ENCODE measurements at regions of chr7 and their contacts with region 1.

Region 1: GRCh38 chr7:2403014-2403717 is at the start of gene CHST12:
- H3K4me3 ChIP-seq: peak within 1 kb of the TSS; percentile 74
- H3K27ac ChIP-seq: peak within 1 kb of the TSS; percentile 68; the same call in 1 of the 2 replicates
- H3K4me1 ChIP-seq: peaks cover 6% of the 10 kb centered on the region
- CTCF ChIP-seq: no peak

Region 2: DNA sequence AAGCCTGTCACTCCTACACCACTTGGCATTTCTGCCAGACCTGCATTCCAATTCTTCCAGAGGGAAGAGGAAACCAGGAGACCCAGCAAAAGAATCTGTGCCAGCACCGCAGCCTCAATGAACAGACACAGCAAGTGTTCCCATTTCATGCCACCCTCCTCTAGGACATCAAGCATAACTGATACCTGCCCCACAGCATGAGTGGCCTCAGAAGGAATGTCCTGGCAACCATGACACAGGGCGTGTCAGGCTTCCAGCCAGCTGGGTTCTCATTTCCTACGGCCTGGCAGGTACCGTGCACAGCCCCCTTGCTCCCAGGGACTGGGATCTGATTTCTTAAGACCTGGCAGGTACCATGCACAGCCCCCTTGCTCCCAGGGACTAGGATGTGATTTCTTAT is 178.2 kb before region 1 on chr7:
- CTCF ChIA-PET with region 1: no interaction called
- POLR2A ChIA-PET with region 1: no interaction called
- H3K4me3 ChIP-seq: no peak overlapping the region
- H3K27ac ChIP-seq: no peak overlapping the region
- H3K4me1 ChIP-seq: no peaks in the 10 kb centered on the region
- CTCF ChIP-seq: no peak

Region 3: DNA sequence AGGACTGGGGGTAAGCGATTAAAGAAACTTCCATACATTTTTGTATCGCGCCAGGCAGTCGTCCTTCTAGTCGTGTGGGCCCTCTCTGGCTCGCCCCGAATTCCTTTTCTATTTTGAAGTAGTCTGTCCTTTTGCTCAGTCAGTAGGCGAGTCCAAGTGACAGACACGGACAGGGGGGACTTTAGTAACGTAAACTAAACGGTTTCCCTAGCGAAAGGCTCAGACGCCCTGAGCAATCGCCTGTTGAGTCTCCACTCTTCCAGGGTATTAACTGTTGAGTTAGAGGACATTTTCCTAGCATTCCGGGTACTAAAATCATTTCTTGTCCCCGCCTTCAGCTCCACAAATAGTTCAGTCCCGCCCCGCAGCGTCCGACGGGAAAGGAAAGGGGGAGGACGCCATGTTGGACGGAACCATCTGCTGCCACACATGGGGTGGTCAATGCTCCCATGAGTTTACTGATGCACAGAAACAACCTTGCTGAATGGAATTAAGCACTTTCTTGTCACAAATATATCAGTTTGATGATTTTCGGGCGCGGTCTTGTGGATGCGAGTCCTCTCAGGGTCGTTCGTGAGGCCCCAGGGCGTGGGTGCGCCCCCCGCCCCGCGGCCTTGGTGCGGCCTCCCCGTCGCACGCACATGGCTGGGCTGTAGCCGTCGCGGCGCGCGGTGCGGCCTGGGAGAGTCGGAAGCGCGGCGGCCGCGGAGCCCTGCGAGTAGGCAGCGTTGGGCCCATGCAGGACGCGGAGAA is 48.8 kb before region 1 on chr7 and contains the start of gene EIF3B:
- CTCF ChIA-PET with region 1: no interaction called
- POLR2A ChIA-PET with region 1: interaction called, 14 read pairs
- H3K4me3 ChIP-seq: peak within 1 kb of the TSS; percentile 90
- H3K27ac ChIP-seq: peak within 1 kb of the TSS; percentile 98
- H3K4me1 ChIP-seq: peaks cover 9% of the 10 kb centered on the region
- CTCF ChIP-seq: no peak

Region 4: GRCh38 chr7:2471396-2471795 is 68.2 kb after region 1 on chr7:
- CTCF ChIA-PET with region 1: interaction called, 10 read pairs
- POLR2A ChIA-PET with region 1: no interaction called
- H3K4me3 ChIP-seq: no peak overlapping the region
- H3K27ac ChIP-seq: 0 out of 2 replicates have a peak overlapping the region, but pooled peaks have one; percentile 3
- H3K4me1 ChIP-seq: no peaks in the 10 kb centered on the region
- CTCF ChIP-seq: no peak